ENCODE measurements at regions of chr1 and their contacts with region 1.

Region 1: GRCh38 chr1:59057211-59057694 is 239.6 kb upstream of the FGGY start:
- DNase-seq: no peak
- CTCF ChIP-seq: no peak

Region 2: DNA sequence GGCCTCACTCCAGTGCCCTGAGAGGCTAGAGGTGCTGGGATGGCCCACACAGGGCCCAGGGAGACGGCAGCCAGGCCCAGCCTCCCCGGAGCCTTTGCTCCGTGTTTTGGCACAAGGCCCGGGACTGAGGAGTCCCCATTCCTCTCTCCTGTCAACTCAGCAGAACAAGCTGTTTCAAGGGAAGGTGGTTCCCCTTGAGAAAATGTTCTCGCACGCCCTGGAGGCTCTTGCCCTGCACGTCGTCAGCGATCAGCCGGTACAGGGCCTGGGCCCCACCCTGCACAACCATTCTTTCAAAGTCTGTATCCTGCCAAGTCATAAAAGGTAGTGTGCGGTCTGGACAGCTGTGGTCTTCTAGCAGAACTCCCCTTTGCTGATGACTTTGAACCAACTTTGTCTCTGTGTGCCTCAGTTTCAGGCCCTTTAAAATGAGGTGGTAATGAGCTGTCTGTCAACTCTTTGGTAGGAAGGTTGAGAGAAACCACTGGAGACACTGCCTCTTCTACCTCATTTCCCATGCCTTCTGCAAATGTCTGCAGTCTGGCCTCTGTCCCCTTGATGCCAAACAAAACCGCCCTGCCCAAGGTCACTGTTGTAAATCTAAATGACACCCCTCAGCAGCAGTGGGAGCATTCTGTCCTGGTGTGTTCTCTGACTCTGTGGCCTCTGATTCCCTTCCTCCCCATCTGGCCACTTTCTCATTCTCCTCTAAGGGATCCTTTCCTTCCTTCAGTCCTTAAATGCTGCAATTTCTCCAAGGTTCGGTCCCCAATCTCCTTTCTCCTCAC is 134.8 kb before region 1 on chr1:
- CTCF ChIA-PET with region 1: no interaction called
- POLR2A ChIA-PET with region 1: no interaction called
- DNase-seq: peak; percentile 37
- CTCF ChIP-seq: no peak

Region 3: DNA sequence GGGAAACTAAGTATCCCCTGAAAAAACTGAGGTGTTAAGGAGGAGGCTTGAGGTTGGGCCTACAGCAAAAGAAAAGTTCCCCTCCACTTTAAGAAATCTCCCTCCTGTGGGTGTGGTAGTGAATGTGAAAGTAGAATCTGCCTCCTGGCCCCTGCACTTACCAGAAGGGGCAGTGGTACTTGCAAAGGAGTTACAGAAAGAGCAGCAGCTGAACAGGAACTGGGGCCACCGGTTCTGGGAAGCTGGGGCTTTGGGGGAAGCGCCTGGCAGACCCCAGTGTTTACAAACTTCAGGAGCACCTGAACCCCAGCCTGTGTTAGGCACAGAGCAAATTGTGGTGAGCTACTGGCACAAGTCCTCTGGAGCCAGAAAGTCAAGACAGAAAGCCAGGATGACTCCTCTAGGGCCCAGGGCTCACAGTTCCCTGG is 10.5 kb before region 1 on chr1:
- CTCF ChIA-PET with region 1: interaction called, 11 read pairs
- POLR2A ChIA-PET with region 1: no interaction called
- DNase-seq: peak; percentile 79
- CTCF ChIP-seq: peak; percentile 19

Measured in GM10248 (cell line).